ENCODE measurements at regions of chr1 and their contacts with region 1.

Region 1: DNA sequence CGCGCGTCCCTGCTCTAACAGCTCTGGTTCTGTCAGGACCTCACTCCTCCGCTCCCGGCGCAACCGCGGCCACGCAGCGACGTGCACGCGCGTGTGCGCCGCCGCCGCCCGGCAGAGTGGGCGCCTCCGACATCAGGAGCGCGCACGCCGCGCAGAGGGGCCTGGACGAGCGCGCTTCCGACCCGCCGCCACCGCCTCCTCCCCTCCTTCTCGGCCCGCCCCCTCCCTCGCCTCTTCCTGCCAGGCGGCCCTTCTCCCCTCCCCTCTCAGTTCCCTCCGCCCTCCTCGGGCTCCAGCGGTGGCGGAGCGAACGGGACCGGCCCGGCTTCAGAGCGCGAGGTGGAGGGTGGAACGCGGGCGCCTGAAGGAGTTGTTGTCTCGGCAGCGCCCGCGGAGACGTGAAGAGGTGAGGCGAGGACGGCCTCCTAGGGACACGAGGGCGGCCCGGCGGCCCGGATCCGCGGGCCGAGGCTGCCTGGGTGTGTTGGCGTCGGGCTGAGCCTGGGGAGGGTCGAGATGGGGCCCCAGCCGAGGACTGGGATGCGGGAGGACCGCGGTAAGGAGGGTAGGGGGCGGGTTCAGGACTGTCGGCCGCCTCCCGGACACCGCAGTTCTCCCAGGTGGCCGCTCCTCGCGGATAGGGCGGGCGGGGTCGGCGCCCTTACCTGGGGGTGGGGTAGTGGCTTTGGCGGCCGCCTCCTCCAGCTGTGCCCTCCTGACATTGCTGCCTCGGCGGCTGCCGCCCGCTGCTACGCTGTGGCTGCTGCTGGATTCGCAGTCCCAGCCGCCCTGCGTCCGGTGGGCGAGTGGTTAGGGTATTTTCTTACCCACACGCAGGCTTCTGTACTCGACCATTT is at the start of gene RABGAP1L:
- DNase-seq: peak; percentile 90 to 98 (median 93)
- ATAC-seq: peak; percentile 90
- H3K4me3 ChIP-seq: peak within 1 kb of the TSS; percentile 73 to 74
- H3K4me3 Mint-ChIP-seq: peak within 1 kb of the TSS; percentile 91
- H3K27ac ChIP-seq: peak within 1 kb of the TSS; percentile 73 to 93
- H3K27ac Mint-ChIP-seq: peak within 1 kb of the TSS; percentile 96
- H3K4me1 ChIP-seq: peaks cover 16% of the 10 kb centered on the region
- H3K4me1 Mint-ChIP-seq: peaks cover 53% of the 10 kb centered on the region
- H3K27me3 ChIP-seq: no peaks in the 10 kb centered on the region
- H3K27me3 Mint-ChIP-seq: no peaks in the 10 kb centered on the region
- CTCF ChIP-seq: no peak
- total RNA-seq, gene RABGAP1L: 60.7 to 65.1 TPM

Region 2: GRCh38 chr1:173714759-173715537 is 444.5 kb before region 1 on chr1 and contains the start of gene KLHL20:
- CTCF ChIA-PET with region 1: no interaction called
- POLR2A ChIA-PET with region 1: no interaction called
- intact Hi-C with region 1: loop called (anchors 2 kb)
- DNase-seq: peak; percentile 72 to 94 (median 83)
- ATAC-seq: peak; percentile 98
- H3K4me3 ChIP-seq: peak within 1 kb of the TSS; percentile 80 to 86
- H3K4me3 Mint-ChIP-seq: peak within 1 kb of the TSS; percentile 96
- H3K27ac ChIP-seq: peak within 1 kb of the TSS; percentile 76 to 87
- H3K27ac Mint-ChIP-seq: peak within 1 kb of the TSS; percentile 97
- H3K4me1 ChIP-seq: peaks cover 24% of the 10 kb centered on the region
- H3K4me1 Mint-ChIP-seq: peaks cover 38% of the 10 kb centered on the region
- H3K27me3 ChIP-seq: peaks cover 0 to 2% of the 10 kb centered on the region in 2 experiments
- H3K27me3 Mint-ChIP-seq: peaks cover 7% of the 10 kb centered on the region
- CTCF ChIP-seq: no peak
- total RNA-seq, gene KLHL20: 27.9 to 29.0 TPM

Region 3: DNA sequence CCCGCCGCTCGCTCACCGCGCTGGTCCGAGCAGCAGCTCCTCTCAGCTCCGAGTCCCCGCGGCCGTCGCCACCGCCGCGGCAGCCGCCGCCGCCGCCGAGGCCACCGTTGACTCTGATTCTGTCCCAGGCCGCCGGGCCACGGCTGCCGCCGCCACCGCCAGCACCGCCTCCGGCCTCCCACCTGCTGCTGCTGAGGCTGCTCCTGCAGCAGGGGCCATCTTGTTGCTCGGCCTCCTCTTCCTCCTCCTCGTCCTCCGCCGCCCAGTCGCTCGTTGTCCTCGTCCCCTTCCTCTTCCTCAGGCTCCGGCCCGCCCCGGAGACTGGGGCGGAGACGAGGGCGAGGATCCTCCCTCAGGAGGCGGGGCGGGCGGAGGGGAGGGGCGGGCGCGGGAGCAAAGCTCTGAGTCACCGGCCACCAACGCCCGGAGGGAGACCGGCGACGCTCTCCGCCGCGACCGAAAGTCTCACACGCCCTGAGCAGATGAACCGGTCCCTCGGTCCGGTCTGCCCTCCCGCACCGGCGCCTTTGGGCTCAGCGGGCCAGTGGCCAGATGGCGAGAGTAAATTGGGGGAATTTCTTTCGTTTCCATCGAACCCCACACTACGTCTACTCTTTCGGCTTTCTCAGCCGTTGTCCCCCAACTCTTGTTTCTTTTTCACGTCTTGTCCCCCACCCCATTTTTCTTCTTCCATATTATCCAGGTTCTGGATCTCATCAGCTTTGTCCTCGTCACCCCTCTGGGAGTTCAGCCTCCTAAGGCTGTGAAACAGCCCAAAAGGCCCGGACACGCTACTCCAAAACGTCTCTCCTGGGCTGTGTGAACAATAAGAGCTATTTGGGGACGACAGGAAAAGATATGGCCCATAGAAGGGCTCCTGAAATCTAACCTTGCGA is 137.2 kb before region 1 on chr1 and contains the start of gene RC3H1:
- CTCF ChIA-PET with region 1: no interaction called
- POLR2A ChIA-PET with region 1: no interaction called
- intact Hi-C with region 1: loop called (anchors 1 to 2 kb)
- DNase-seq: peak; percentile 79 to 93 (median 89)
- ATAC-seq: peak; percentile 95
- H3K4me3 ChIP-seq: peak within 1 kb of the TSS; percentile 83 to 94
- H3K4me3 Mint-ChIP-seq: peak within 1 kb of the TSS; percentile 95
- H3K27ac ChIP-seq: peak within 1 kb of the TSS; percentile 84 to 93
- H3K27ac Mint-ChIP-seq: peak within 1 kb of the TSS; percentile 98
- H3K4me1 ChIP-seq: peaks cover 30% of the 10 kb centered on the region
- H3K4me1 Mint-ChIP-seq: peaks cover 45% of the 10 kb centered on the region
- H3K27me3 ChIP-seq: no peaks in the 10 kb centered on the region
- H3K27me3 Mint-ChIP-seq: no peaks in the 10 kb centered on the region
- CTCF ChIP-seq: no peak
- total RNA-seq, gene RC3H1: 40.2 to 41.4 TPM

Region 4: GRCh38 chr1:174204697-174205308 is 45.3 kb after region 1 on chr1:
- CTCF ChIA-PET with region 1: no interaction called
- POLR2A ChIA-PET with region 1: interaction called, 4 read pairs
- intact Hi-C with region 1: loop called in 1 of 2 experiments (anchors 10 kb)
- DNase-seq: peak in 2 of 9 experiments; percentile 34 to 60
- ATAC-seq: peak; percentile 61
- H3K4me3 ChIP-seq: no peak overlapping the region
- H3K4me3 Mint-ChIP-seq: peak overlapping the region; percentile 23
- H3K27ac ChIP-seq: peak overlapping the region in 1 of 2 experiments; percentile 51
- H3K27ac Mint-ChIP-seq: peak overlapping the region; percentile 62
- H3K4me1 ChIP-seq: peaks cover 29% of the 10 kb centered on the region
- H3K4me1 Mint-ChIP-seq: peaks cover 64% of the 10 kb centered on the region
- H3K27me3 ChIP-seq: no peaks in the 10 kb centered on the region
- H3K27me3 Mint-ChIP-seq: no peaks in the 10 kb centered on the region
- CTCF ChIP-seq: no peak

Measured in CD8-positive, alpha-beta T cell (primary cell).